ENCODE measurements at regions of chr15 and their contacts with region 1.

Region 1: GRCh38 chr15:81312790-81313543 is 11.0 kb downstream of the STARD5 start:
- DNase-seq: no peak
- ATAC-seq: no peak
- H3K4me3 Mint-ChIP-seq: no peak overlapping the region
- H3K27ac Mint-ChIP-seq: peak overlapping the region; percentile 44
- H3K4me1 Mint-ChIP-seq: peaks cover 67% of the 10 kb centered on the region
- H3K27me3 Mint-ChIP-seq: no peaks in the 10 kb centered on the region

Region 2: DNA sequence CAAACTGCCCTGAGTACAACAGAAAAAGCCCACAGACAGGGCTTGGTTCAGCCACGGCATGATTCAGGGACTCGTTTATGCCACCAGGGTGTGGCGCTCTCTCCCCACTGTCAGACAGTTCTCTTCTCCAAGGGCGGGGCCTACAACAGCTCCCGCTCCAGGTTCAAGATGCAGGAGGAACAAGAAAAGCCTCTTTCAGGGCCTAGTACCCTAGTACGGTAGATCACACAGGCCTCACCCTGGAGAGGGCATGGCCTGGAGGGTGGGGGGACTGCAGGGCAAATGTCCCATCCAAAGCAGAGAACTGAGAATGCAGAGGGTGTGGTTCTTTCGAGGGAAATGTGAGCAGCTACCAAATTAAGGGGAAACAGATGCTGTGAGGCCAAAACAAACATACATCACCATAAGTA is 335.3 kb before region 1 on chr15:
- CTCF ChIA-PET with region 1: no interaction called
- POLR2A ChIA-PET with region 1: no interaction called
- intact Hi-C with region 1: no loop called
- DNase-seq: peak; percentile 70
- ATAC-seq: peak; percentile 79
- H3K4me3 Mint-ChIP-seq: no peak overlapping the region
- H3K27ac Mint-ChIP-seq: peak overlapping the region; percentile 61
- H3K4me1 Mint-ChIP-seq: peaks cover 44% of the 10 kb centered on the region
- H3K27me3 Mint-ChIP-seq: no peaks in the 10 kb centered on the region

Region 3: DNA sequence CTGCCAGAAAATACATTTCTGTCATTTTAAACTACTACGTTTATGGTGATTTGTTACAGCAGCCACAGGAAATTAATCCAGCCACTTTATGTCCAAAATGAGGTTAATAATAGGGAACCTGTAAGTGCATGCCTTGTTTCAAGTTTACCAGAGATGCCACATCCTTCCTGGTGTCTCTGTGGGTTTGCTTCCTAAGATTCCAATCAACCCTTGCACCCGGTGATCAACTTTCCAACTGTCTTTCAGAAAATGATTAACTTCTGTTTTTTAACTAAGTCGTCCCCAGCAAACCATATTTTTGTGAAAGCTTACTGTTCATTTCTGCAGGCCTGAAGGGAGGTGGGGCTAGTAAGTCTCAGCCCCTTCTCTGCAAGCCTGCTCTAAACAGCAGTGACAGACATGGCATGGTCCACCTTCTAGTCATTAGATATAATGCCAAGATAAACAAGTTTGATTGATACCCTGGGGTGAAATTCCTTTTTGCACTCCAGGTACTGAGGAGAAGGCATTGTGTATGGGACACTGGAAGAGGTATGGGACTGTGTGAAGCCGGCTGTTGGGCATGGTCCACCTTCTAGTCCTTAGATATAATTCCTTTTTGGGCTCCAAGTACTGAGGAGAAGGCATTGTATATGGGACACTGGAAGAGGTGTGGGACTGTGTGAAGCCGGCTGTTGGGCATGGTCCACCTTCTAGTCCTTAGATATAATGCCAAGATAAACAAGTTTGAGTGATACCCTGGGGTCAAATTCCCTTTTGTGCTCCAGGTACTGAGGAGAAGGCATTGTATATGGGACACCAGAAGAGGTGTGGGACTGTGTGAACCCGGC is 72.1 kb after region 1 on chr15:
- CTCF ChIA-PET with region 1: no interaction called
- POLR2A ChIA-PET with region 1: no interaction called
- intact Hi-C with region 1: loop called in 1 of 2 experiments (anchors 10 kb)
- DNase-seq: no peak
- ATAC-seq: no peak
- H3K4me3 Mint-ChIP-seq: no peak overlapping the region
- H3K27ac Mint-ChIP-seq: no peak overlapping the region
- H3K4me1 Mint-ChIP-seq: peaks cover 12% of the 10 kb centered on the region
- H3K27me3 Mint-ChIP-seq: no peaks in the 10 kb centered on the region

Region 4: GRCh38 chr15:81939604-81940440 is 626.9 kb after region 1 on chr15:
- CTCF ChIA-PET with region 1: no interaction called
- POLR2A ChIA-PET with region 1: no interaction called
- intact Hi-C with region 1: no loop called
- DNase-seq: peak; percentile 46
- ATAC-seq: peak; percentile 19
- H3K4me3 Mint-ChIP-seq: no peak overlapping the region
- H3K27ac Mint-ChIP-seq: no peak overlapping the region
- H3K4me1 Mint-ChIP-seq: no peaks in the 10 kb centered on the region
- H3K27me3 Mint-ChIP-seq: peaks cover 7% of the 10 kb centered on the region

Measured in activated CD4-positive, alpha-beta T cell treated with anti-CD3 and anti-CD28 coated beads for 36 hours (primary cell).